ENCODE measurements at regions of chr5 and their contacts with region 1.

Region 1: GRCh38 chr5:65035211-65036206 is 266.8 kb downstream of the CWC27 start:
- DNase-seq: peak; percentile 89
- ATAC-seq: peak; percentile 90
- H3K4me3 Mint-ChIP-seq: peak overlapping the region; percentile 71
- H3K27ac Mint-ChIP-seq: peak overlapping the region; percentile 92
- H3K4me1 Mint-ChIP-seq: peaks cover 42% of the 10 kb centered on the region
- H3K27me3 Mint-ChIP-seq: no peaks in the 10 kb centered on the region

Region 2: DNA sequence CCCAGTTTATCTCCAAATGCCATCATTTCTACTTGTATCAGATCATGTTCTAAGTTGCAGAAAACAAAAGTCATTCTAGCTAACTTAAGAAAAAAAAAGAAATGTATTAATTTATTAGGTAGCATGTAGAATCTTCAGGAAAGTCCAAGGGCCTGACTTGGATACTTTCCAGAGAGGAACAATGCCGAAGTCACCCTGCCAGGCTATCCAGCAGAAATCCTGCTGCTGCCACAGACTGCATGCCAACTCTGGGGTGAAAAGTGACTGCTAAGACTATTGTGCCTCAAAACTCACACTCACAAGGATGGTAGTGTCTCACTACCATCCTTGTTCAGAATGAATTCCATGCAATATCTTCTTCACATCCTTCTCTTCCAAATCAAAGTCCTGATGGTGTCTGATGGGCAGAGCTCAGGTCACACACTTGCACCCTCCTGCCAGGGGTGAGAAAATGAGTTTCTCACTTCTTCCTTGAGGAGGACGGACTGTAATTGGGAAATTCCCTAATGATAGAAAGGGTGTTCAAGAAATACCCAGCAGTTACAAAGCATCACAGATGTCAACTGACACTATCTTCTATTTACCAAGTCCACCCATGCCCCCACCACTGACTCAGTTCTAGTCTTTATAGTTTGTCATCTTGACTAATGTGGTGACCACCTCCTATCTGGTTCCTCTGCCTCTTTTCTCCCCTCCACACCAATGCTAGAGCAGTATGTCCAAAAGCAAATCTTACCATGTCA is 12.6 kb after region 1 on chr5:
- CTCF ChIA-PET with region 1: interaction called, 17 read pairs
- POLR2A ChIA-PET with region 1: interaction called, 4 read pairs
- DNase-seq: no peak
- ATAC-seq: no peak
- H3K4me3 Mint-ChIP-seq: no peak overlapping the region
- H3K27ac Mint-ChIP-seq: no peak overlapping the region
- H3K4me1 Mint-ChIP-seq: peaks cover 17% of the 10 kb centered on the region
- H3K27me3 Mint-ChIP-seq: peaks cover 1% of the 10 kb centered on the region

Region 3: GRCh38 chr5:65102828-65103711 is 67.6 kb after region 1 on chr5:
- CTCF ChIA-PET with region 1: interaction called, 4 read pairs
- POLR2A ChIA-PET with region 1: interaction called, 20 read pairs
- DNase-seq: peak; percentile 53
- ATAC-seq: peak; percentile 83
- H3K4me3 Mint-ChIP-seq: peak overlapping the region; percentile 73
- H3K27ac Mint-ChIP-seq: peak overlapping the region; percentile 80
- H3K4me1 Mint-ChIP-seq: peaks cover 55% of the 10 kb centered on the region
- H3K27me3 Mint-ChIP-seq: peaks cover 11% of the 10 kb centered on the region